Colonic mucosa (tissue), 4 donors: ENCODE measurements at regions of chr3 and their contacts with region 1.

Region 1: DNA sequence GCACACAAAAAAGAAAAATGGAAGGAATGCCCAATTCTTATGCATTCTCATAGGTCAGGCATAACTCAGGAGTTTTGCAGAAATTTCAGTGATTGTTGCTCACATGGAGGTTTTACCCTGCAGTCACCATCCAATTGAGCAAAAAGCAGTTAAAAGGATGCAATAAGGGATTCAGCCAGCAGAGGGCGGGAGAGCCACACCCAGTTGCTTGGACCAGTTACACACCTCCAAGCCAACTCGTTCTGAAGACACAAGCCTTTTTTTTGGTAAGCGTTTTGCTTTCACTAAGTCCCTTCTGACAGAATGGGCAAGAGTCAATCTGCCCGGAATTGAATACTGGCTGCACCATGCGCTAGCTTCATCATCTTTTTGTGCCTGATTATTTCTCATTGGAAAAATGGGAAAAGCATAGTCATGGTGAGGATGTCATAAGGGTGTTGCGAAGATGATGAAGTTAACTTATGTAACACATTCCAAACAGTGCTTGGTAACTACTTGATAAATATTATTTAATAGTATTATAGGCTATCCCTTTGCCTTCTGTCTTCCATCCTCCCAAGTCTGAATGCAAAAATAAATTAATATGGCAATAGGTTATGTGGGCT is 154.4 kb upstream of the SGO1 start:
- DNase-seq: peak; percentile 67
- H3K4me3 ChIP-seq: no peak overlapping the region
- H3K27ac ChIP-seq: no peak overlapping the region
- H3K4me1 ChIP-seq: no peaks in the 10 kb centered on the region
- H3K27me3 ChIP-seq: no peaks in the 10 kb centered on the region
- CTCF ChIP-seq: peak; percentile 82

Region 2: DNA sequence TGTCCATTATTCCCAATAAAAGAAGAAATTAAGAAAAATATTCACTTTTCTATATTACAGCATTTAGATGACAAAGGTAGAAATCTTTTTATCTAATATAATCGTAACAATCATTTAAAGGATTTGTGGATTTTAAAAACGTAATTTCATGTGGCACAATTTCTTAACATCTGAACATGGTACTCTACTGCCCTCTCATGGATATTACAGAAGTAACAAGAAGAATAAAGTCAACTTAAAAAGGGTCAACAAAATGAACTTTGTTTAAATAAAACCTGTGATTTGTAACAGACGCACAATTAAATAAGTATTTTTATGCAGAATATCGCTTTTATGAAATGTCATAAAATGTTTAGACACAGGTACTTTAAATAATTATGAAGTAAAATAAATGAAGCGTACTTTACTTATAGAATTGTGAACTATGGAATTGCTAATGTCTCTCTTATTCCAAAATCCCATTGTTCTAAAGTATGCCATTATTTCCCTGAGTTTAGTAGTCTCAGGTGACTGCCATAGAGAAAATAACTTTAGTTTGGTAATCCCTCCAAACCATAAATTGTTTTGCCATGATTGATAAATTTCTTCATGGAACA is 1777.4 kb after region 1 on chr3:
- intact Hi-C with region 1: loop called (anchors 10 kb)
- DNase-seq: no peak
- H3K4me3 ChIP-seq: no peak overlapping the region
- H3K27ac ChIP-seq: no peak overlapping the region
- H3K4me1 ChIP-seq: no peaks in the 10 kb centered on the region
- H3K27me3 ChIP-seq: no peaks in the 10 kb centered on the region
- CTCF ChIP-seq: peak; percentile 46